MCF 10A (cell line): ENCODE measurements at regions of chr7 and their contacts with region 1.

Region 1: DNA sequence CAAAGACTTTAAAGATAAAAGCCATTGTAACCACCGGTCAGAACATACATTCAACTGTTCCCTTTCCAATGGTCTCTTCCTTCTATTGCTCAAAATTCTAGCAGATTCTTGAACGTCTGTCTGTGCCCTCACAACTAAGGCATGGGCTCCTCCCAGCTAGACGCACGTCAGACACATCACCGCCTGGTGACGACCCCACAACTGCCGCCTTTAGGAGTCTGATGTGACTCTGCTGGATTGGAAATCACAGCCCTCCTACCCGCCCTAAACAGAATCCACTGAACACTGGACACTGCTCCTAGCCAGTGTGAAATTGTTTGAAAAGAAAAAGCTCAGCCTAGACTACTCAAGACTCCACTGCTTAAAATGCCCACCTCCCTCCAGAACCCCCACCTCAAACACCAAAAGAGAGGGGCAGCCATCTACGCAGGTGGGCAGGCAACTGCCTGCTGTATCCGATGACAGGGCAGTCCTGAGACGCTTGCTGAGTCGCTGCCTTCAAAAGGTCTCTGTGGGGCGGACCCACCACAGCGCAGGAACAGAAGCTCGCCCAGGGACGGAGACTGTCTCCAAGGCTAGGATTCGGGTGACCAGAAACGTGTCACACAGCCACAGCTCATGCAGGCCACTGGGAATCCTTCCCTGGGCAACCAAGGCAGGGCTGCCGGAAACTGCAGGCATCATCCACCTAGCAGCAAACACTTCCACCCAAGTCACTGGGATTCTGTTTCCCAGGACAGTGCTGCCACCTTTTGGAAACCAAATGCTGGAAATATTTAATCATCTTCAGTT is 34.7 kb downstream of the GSDME start:
- DNase-seq: peak; percentile 44
- H3K4me3 Mint-ChIP-seq: no peak overlapping the region
- H3K27ac Mint-ChIP-seq: peak overlapping the region; percentile 10
- H3K4me1 Mint-ChIP-seq: peaks cover 30% of the 10 kb centered on the region
- H3K27me3 Mint-ChIP-seq: no peaks in the 10 kb centered on the region
- CTCF ChIP-seq: no peak

Region 2: GRCh38 chr7:24455813-24456525 is 266.6 kb before region 1 on chr7:
- CTCF ChIA-PET with region 1: no interaction called
- POLR2A ChIA-PET with region 1: no interaction called
- intact Hi-C with region 1: no loop called
- DNase-seq: no peak
- H3K4me3 Mint-ChIP-seq: no peak overlapping the region
- H3K27ac Mint-ChIP-seq: no peak overlapping the region
- H3K4me1 Mint-ChIP-seq: no peaks in the 10 kb centered on the region
- H3K27me3 Mint-ChIP-seq: peaks cover 73% of the 10 kb centered on the region
- CTCF ChIP-seq: no peak

Region 3: DNA sequence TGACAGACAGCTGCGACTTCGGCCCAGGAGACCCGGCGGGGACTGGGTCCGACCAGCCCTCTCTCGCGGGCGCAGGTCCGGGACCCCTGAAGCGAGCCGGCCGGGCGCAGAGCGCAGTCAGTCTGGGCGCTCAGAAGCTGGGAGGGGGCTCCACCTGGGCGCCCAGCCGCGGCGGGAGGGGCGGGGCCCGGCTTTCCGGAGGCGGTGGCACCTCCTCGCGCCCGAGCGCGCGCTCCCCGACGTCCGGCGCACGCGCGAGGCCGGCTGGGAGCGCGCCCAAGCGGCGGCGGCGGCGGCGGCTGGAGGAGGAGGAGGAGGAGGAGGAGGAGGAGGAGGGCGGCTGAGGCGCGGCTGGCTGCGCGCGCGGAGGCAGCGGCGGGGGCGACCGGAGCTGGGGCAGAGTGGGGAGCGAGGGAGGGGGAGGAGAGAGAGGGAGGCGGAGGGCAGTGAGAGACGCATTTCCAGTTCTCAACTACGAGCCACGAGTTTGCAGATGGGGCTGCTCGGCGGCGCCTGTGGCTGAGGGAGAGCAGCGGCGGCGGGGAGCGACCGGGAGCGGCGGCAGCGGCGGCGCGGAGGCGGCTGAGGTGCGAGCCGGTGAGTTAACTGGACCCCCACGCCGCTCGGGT is 149.5 kb before region 1 on chr7 and contains the start of gene PALS2:
- CTCF ChIA-PET with region 1: interaction called, 13 read pairs
- POLR2A ChIA-PET with region 1: interaction called, 7 read pairs
- intact Hi-C with region 1: loop called (anchors 1 kb)
- DNase-seq: peak; percentile 73
- H3K4me3 Mint-ChIP-seq: peak within 1 kb of the TSS; percentile 99
- H3K27ac Mint-ChIP-seq: peak within 1 kb of the TSS; percentile 95
- H3K4me1 Mint-ChIP-seq: peaks cover 19% of the 10 kb centered on the region
- H3K27me3 Mint-ChIP-seq: peaks cover 28% of the 10 kb centered on the region
- CTCF ChIP-seq: no peak
- total RNA-seq, gene PALS2: 36.3 and 45.9 TPM in 2 replicates

Region 4: DNA sequence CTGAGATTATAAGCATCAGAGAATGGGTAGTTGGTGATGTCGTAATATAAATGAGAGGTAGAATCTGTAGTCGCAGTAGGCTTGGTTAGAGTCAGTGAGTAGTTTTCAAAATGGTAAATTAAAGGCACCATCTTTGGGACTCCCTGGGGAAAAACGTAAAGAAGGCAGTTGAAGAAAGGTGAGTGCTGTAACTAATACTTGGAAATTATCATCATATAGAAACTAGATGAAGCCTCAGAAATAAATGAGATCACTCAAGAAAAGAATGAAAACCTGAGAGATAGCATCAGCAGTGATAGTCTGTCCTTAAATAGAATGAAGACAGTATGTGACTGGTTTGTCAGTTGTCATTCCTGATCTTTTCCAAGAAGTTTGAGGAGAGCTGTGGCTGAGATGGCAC is 125.6 kb before region 1 on chr7:
- CTCF ChIA-PET with region 1: no interaction called
- POLR2A ChIA-PET with region 1: no interaction called
- intact Hi-C with region 1: no loop called
- DNase-seq: no peak
- H3K4me3 Mint-ChIP-seq: no peak overlapping the region
- H3K27ac Mint-ChIP-seq: no peak overlapping the region
- H3K4me1 Mint-ChIP-seq: peaks cover 9% of the 10 kb centered on the region
- H3K27me3 Mint-ChIP-seq: no peaks in the 10 kb centered on the region
- CTCF ChIP-seq: no peak

Region 5: GRCh38 chr7:24701261-24702235 is 21.0 kb before region 1 on chr7:
- CTCF ChIA-PET with region 1: interaction called, 23 read pairs
- POLR2A ChIA-PET with region 1: interaction called, 7 read pairs
- intact Hi-C with region 1: no loop called
- DNase-seq: peak; percentile 87
- H3K4me3 Mint-ChIP-seq: no peak overlapping the region
- H3K27ac Mint-ChIP-seq: no peak overlapping the region
- H3K4me1 Mint-ChIP-seq: peaks cover 30% of the 10 kb centered on the region
- H3K27me3 Mint-ChIP-seq: no peaks in the 10 kb centered on the region
- CTCF ChIP-seq: no peak

Region 6: GRCh38 chr7:24757353-24758275 is 35.0 kb after region 1 on chr7 and contains the start of gene GSDME:
- CTCF ChIA-PET with region 1: interaction called, 4 read pairs
- POLR2A ChIA-PET with region 1: interaction called, 16 read pairs
- intact Hi-C with region 1: no loop called
- DNase-seq: peak; percentile 65
- H3K4me3 Mint-ChIP-seq: peak within 1 kb of the TSS; percentile 90
- H3K27ac Mint-ChIP-seq: peak within 1 kb of the TSS; percentile 92
- H3K4me1 Mint-ChIP-seq: peaks cover 23% of the 10 kb centered on the region
- H3K27me3 Mint-ChIP-seq: no peaks in the 10 kb centered on the region
- CTCF ChIP-seq: no peak
- total RNA-seq, gene GSDME: 41.6 and 46.1 TPM in 2 replicates

Region 7: GRCh38 chr7:24907311-24907886 is 184.8 kb after region 1 on chr7:
- CTCF ChIA-PET with region 1: no interaction called
- POLR2A ChIA-PET with region 1: no interaction called
- intact Hi-C with region 1: no loop called
- DNase-seq: peak; percentile 89
- H3K4me3 Mint-ChIP-seq: no peak overlapping the region
- H3K27ac Mint-ChIP-seq: no peak overlapping the region
- H3K4me1 Mint-ChIP-seq: peaks cover 43% of the 10 kb centered on the region
- H3K27me3 Mint-ChIP-seq: no peaks in the 10 kb centered on the region
- CTCF ChIP-seq: no peak

Region 8: GRCh38 chr7:25565949-25566348 is 843.4 kb after region 1 on chr7:
- CTCF ChIA-PET with region 1: no interaction called
- POLR2A ChIA-PET with region 1: no interaction called
- intact Hi-C with region 1: no loop called
- DNase-seq: peak; percentile 71
- H3K4me3 Mint-ChIP-seq: no peak overlapping the region
- H3K27ac Mint-ChIP-seq: no peak overlapping the region
- H3K4me1 Mint-ChIP-seq: no peaks in the 10 kb centered on the region
- H3K27me3 Mint-ChIP-seq: peaks cover 45% of the 10 kb centered on the region
- CTCF ChIP-seq: peak; percentile 100